Posterior cingulate gyrus (tissue), 11 donors: ENCODE measurements at regions of chrX and their contacts with region 1.

Region 1: DNA sequence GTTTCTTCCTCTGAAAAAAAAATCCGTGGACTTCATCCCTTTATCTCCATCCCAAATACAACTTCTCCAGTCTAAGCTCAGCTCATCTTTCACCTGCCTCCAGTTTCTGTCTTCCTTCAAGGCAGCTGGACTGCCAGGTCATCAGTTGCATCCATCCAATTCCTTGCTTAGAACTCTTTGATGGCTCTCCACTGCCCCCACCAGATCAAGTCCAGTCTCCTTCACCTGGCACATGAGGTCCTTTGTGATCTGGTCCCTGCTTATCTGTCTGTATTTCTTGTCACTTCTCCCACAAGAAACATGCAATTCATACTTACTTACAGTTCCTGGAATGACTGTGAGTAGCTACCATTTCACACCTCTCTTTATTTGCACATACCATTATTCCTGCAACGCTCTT is 33.8 kb downstream of the OTUD6A start:
- DNase-seq: no peak

Region 2: DNA sequence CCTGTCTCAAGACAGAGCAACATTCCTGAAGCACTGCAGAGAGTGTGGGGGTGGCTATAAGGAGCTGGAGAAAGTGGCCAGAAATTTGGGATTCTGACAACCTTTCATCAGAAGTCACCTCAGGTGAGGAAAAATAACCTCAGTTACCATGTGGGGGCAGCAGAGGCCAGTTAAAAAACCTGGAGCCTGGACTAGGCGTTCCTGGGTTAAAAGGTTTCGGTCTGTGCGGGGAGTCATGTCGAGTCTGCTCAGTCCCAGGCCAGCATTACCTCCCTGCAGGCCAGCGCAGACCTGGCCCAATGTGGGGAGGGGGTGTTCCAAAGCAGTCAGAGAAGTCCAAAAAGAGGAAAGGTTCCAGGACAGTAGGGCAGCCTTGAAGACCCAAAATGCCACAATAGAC is 602.9 kb before region 1 on chrX:
- intact Hi-C with region 1: loop called (anchors 2 kb)
- DNase-seq: peak in 2 of 10 donors; percentile 30 to 34

Region 3: GRCh38 chrX:69538321-69538876 is 557.7 kb before region 1 on chrX:
- intact Hi-C with region 1: loop called (anchors 2 kb)
- DNase-seq: peak in 9 of 10 donors; percentile 45 to 93 (median 69)